ENCODE measurements at regions of chr2 and their contacts with region 1.

Region 1: DNA sequence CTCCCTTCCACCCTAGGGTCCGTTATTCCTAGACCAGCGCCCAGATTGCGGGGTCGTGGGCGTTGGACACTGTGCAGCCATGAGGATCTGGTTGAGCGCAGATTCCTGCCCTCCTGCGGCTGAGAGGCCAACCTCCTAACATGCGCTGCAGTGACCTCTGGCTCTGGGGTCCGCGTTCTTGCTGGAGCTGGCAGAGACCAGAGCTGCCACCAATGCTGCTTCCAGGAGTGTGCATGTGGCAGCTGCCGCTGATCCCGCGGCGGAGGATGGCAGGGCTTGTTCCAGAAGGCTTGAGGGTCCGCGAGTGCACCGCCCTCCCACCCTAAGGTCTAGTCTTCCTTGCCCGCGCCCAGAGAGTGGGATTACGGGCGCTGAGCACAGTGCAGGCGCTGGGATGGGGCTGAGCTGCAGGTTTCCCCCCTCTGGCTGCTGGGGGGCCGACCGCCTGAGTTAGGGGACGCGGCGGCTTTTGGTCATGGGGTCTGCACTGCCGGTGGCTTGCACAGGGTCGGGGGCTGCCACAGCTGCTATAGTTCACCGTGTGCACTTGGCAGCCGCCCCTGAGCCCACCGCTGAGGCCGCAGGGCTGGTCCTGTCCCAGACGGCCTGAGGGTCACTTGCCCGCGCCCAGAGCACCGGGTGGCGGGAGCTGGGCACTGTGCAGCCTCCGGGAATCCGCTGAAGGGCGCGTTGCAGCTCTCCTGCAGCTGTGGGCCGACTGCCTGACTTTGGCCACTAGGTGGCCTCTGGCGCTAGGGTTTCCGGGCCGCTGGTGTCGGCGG is 145.9 kb downstream of the CCDC74A start:
- DNase-seq: peak; percentile 85
- ATAC-seq: peak; percentile 93 to 99

Region 2: GRCh38 chr2:131154071-131154531 is 519.5 kb before region 1 on chr2:
- intact Hi-C with region 1: loop called in 1 of 2 experiments (anchors 10 kb)
- DNase-seq: peak; percentile 56
- ATAC-seq: peak; percentile 88 to 93

Region 3: GRCh38 chr2:131413148-131413747 is 260.3 kb before region 1 on chr2:
- intact Hi-C with region 1: loop called in 1 of 2 experiments (anchors 5 kb)
- DNase-seq: no peak
- ATAC-seq: peak; percentile 53 to 59

Region 4: GRCh38 chr2:131801210-131801744 is 127.7 kb after region 1 on chr2:
- intact Hi-C with region 1: loop called in 1 of 2 experiments (anchors 10 kb)
- DNase-seq: no peak
- ATAC-seq: no peak